Activated naive CD4-positive, alpha-beta T cell treated with anti-CD3 and anti-CD28 coated beads for 36 hours (primary cell): ENCODE measurements at regions of chr19 and their contacts with region 1.

Region 1: DNA sequence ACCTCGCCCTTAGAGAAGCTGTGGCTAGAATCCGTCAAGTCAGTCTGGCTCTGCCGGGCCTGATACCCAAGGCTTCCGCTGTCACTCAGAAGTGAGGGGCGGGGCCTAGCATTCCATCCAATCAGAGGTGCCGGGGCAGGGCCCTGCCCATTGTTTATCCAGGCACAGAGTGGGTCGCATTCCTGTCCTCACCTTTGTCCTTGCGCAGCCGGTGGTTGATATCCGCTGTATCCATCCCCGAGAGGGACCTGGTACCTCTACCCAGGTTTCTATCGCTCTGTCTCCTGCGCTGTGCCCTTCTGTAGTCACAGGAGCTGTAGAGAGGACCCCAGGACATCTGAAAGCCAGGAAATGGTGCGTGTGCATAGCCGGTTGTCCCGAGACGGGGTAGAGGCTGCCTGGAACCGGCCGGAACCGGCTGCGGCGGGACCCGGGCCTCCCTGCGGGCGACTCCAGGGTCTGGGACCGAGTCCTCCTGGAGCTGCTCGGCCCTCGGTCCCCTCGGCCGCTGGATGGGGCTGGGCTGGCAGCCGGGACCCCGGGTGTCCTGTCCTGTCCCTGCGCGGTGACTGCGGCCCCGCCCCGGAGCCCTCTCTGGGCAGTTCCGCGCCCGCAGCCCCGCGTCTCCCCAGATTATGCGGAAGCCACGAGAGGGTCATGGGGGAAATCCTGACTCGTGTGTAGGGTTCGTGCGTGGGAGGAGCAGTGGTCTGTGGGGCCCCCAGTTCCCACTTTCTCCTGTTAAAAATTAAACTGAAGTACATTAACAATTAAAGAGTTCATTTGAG is at the start of gene ZNF763:
- DNase-seq: peak; percentile 95
- H3K4me3 Mint-ChIP-seq: peak within 1 kb of the TSS; percentile 86
- H3K27ac Mint-ChIP-seq: peak within 1 kb of the TSS; percentile 85
- H3K4me1 Mint-ChIP-seq: peaks cover 20% of the 10 kb centered on the region
- H3K27me3 Mint-ChIP-seq: no peaks in the 10 kb centered on the region
- total RNA-seq, gene ZNF763: 0.50 to 0.54 TPM

Region 2: GRCh38 chr19:11848594-11849469 is 116.2 kb before region 1 on chr19 and contains the start of gene ZNF439:
- CTCF ChIA-PET with region 1: no interaction called
- intact Hi-C with region 1: no loop called
- DNase-seq: peak; percentile 97
- H3K4me3 Mint-ChIP-seq: peak within 1 kb of the TSS; percentile 83
- H3K27ac Mint-ChIP-seq: peak within 1 kb of the TSS; percentile 76
- H3K4me1 Mint-ChIP-seq: peaks cover 15% of the 10 kb centered on the region
- H3K27me3 Mint-ChIP-seq: no peaks in the 10 kb centered on the region
- total RNA-seq, gene ZNF439: 3.6 to 4.4 TPM

Region 3: GRCh38 chr19:11881151-11881800 is 83.8 kb before region 1 on chr19:
- CTCF ChIA-PET with region 1: no interaction called
- intact Hi-C with region 1: loop called (anchors 1 kb)
- DNase-seq: peak; percentile 78
- H3K4me3 Mint-ChIP-seq: no peak overlapping the region
- H3K27ac Mint-ChIP-seq: no peak overlapping the region
- H3K4me1 Mint-ChIP-seq: no peaks in the 10 kb centered on the region
- H3K27me3 Mint-ChIP-seq: no peaks in the 10 kb centered on the region

Region 4: GRCh38 chr19:11931051-11931450 is 34.0 kb before region 1 on chr19:
- CTCF ChIA-PET with region 1: no interaction called
- intact Hi-C with region 1: no loop called
- DNase-seq: no peak
- H3K4me3 Mint-ChIP-seq: no peak overlapping the region
- H3K27ac Mint-ChIP-seq: no peak overlapping the region
- H3K4me1 Mint-ChIP-seq: peaks cover 35% of the 10 kb centered on the region
- H3K27me3 Mint-ChIP-seq: no peaks in the 10 kb centered on the region

Region 5: DNA sequence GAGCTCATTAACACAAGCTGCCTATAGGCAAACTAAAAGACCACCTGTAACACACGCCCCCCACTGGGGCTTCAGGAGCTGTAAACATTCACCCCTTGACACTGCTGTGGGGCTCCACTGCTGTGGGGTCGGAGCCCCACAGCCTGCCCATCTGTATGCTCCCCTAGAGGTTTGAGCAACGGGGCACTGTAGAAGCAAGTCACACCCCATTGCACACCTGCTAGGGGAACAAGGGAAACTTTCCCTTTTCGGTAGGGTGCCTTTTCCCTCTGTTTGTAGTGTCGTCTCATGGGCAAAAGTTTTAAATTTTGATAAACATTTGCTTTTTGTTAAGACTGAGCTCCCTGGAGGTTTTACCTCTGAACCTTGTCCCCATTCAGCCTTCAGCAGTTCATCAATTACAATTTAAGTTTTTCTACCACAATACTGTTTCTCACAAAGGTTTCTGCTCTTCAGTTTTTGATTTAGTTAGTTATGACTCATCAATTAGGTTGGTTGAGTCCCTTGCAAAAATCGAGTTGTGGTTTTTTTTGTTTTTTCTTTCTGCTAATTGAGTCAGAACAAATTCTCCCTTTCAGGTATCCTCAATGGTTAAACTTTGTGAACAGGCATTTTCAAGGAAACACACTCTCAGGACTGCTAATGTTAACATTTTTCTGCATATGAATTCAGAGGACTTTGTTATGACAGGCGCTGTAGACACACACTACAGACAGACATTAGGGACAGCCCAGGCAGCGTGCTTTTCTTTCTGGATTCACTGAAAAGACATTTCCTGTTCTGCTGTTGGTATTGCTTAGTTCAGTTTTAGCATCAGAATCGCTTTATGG is 35.3 kb after region 1 on chr19:
- CTCF ChIA-PET with region 1: no interaction called
- intact Hi-C with region 1: loop called (anchors 5 kb)
- DNase-seq: peak; percentile 70
- H3K4me3 Mint-ChIP-seq: no peak overlapping the region
- H3K27ac Mint-ChIP-seq: peak overlapping the region; percentile 78
- H3K4me1 Mint-ChIP-seq: peaks cover 19% of the 10 kb centered on the region
- H3K27me3 Mint-ChIP-seq: no peaks in the 10 kb centered on the region

Region 6: DNA sequence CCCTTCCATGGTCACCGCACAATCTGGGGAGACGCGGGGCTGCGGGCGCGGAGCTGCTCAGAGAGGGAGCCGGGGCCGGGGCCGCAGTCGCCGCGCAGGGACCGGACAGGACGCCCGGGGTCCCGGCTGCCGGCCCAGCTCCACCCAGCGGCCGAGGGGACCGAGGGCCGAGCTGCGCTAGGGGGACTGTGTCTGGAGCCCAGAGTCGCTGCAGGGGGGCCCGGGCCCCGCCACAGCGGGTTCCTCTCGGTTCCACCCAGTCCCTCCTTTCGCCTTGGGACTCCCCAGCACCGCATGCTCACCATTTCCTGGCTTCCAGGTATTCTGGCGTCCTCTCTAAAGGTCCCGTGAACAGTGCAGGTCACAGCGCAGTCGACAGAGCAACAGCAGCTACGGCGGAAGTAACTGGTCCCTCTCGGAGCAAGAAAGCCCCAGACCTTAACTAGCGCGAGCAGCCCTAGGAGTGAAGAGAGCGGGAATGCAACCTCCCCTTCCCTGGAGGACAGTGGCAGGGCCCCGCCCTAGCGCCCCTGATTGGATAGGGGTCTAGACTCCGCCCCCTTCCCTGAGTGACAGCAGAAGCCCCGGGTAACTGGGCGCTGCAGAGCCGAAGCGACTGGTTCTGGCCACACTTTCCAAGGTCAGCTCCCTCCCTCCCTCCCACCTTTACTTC is 87.6 kb after region 1 on chr19 and contains the start of gene ZNF878:
- CTCF ChIA-PET with region 1: interaction called, 8 read pairs
- intact Hi-C with region 1: loop called (anchors 1 kb)
- DNase-seq: peak; percentile 80
- H3K4me3 Mint-ChIP-seq: peak within 1 kb of the TSS; percentile 80
- H3K27ac Mint-ChIP-seq: no peak within 1 kb of the TSS
- H3K4me1 Mint-ChIP-seq: peaks cover 9% of the 10 kb centered on the region
- H3K27me3 Mint-ChIP-seq: peaks cover 19% of the 10 kb centered on the region
- total RNA-seq, gene ZNF878: 0.38 to 0.49 TPM

Region 7: DNA sequence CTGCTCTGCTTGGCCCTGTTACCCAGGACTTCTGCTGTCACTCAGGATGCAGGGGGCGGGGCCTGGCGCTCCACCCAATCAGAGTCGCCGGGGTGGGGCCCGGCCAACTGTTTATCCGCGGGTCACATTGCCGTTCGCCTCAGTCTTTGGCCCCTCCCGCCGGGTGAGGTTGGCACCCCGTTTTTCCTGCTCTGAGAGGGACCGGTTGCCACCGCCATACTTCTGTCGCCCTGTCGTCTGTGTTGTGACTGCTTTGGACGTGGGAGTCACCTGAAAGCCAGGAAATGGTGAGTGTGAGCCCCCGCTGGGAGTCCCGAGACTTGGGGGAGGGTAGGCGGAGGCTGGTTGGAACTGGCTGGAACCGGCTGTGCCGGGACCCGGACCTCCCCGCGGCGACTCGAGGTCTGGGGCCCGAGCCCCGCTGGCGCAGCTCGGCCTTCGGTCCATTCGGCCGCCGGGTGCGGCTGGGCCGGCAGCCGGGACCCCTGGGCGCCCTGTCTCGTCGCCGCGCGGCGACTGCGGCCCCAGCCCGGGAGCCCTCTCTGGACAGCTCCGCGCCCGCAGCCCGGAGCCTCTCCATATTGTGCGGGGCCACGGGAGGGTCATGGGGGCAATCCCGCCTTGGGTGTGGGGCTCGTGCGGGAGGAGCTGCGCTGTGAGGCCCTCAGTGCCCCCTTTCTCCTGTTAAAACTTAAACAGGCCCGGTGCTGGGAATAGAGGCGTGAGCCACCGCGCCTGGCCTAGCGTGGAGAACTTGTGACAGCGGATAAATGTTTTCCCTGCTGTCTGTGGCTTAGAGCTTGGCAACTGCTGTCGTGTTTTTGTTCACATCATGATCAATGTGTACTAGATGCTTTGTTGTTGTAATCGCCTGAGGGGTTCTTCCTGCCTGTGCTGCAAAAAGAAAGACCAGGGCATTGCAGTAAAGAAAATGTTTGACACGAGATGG is 99.8 kb after region 1 on chr19 and contains the start of gene ZNF844:
- CTCF ChIA-PET with region 1: interaction called, 16 read pairs
- intact Hi-C with region 1: no loop called
- DNase-seq: peak; percentile 85
- H3K4me3 Mint-ChIP-seq: peak within 1 kb of the TSS; percentile 80
- H3K27ac Mint-ChIP-seq: no peak within 1 kb of the TSS
- H3K4me1 Mint-ChIP-seq: peaks cover 6% of the 10 kb centered on the region
- H3K27me3 Mint-ChIP-seq: no peaks in the 10 kb centered on the region
- total RNA-seq, gene ZNF844: 1.6 TPM

Region 8: GRCh38 chr19:12092065-12092867 is 127.2 kb after region 1 on chr19:
- CTCF ChIA-PET with region 1: interaction called, 13 read pairs
- intact Hi-C with region 1: no loop called
- DNase-seq: peak; percentile 86
- H3K4me3 Mint-ChIP-seq: peak overlapping the region; percentile 83
- H3K27ac Mint-ChIP-seq: peak overlapping the region; percentile 73
- H3K4me1 Mint-ChIP-seq: peaks cover 6% of the 10 kb centered on the region
- H3K27me3 Mint-ChIP-seq: peaks cover 14% of the 10 kb centered on the region

Region 9: GRCh38 chr19:12139885-12140547 is 175.0 kb after region 1 on chr19 and contains the start of gene ZNF20:
- CTCF ChIA-PET with region 1: interaction called, 14 read pairs
- intact Hi-C with region 1: loop called (anchors 1 kb)
- DNase-seq: peak; percentile 95
- H3K4me3 Mint-ChIP-seq: peak within 1 kb of the TSS; percentile 92
- H3K27ac Mint-ChIP-seq: peak within 1 kb of the TSS; percentile 65
- H3K4me1 Mint-ChIP-seq: peaks cover 32% of the 10 kb centered on the region
- H3K27me3 Mint-ChIP-seq: no peaks in the 10 kb centered on the region
- total RNA-seq, gene ZNF20: 2.1 to 3.1 TPM

Region 10: DNA sequence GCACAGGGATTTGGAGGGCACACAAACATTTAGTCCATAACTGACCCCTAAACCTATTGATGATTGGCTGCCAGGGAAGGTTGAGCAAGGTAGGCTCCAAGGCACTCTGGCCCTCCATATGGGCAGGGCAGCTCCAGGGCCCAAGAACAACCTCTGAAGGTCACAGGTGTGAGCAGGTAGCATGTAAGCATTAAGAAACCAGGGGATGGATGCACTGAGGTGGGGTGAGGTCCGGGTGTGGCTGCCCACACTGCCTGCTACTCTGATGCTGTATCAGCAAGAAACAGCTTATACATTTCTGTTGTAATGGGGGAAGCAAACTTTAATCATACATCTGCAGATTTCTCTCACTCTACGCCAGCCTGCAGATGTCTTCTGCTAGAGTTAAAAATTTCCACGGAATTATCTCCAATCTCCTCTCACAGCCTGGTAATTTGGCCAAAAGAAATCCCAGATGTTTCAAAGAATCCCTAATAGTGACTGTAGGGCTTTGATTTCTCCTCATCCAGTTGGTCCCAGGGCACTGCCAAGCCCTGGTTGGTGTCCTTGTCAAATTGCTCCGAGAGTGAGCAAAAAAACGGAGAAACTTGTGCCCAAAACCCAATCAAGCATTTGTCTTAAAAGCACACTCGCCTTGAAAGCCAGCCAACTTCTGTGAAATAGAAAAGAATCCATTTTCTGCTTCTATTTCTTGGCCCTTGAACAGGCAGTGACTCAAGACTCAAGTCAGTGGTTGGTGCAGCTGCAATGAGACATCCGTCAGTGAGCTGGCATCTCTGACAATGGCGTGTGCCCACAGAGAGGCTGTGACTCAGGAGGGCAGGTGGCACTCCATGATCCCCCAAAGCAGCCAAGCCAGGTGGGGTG is 1726.8 kb after region 1 on chr19:
- CTCF ChIA-PET with region 1: no interaction called
- intact Hi-C with region 1: no loop called
- DNase-seq: no peak
- H3K4me3 Mint-ChIP-seq: no peak overlapping the region
- H3K27ac Mint-ChIP-seq: no peak overlapping the region
- H3K4me1 Mint-ChIP-seq: no peaks in the 10 kb centered on the region
- H3K27me3 Mint-ChIP-seq: peaks cover 9% of the 10 kb centered on the region